ENCODE measurements at regions of chr11 and their contacts with region 1.

Region 1: GRCh38 chr11:26556581-26556980 is 15.5 kb downstream of the MUC15 start:
- DNase-seq: no peak
- ATAC-seq: peak; percentile 85
- H3K4me3 ChIP-seq: no peak overlapping the region
- H3K27ac ChIP-seq: no peak overlapping the region
- H3K4me1 ChIP-seq: no peaks in the 10 kb centered on the region
- H3K27me3 ChIP-seq: no peaks in the 10 kb centered on the region
- CTCF ChIP-seq: no peak
- EP300 ChIP-seq: no peak
- POLR2A ChIP-seq: no peak
- RAD21 ChIP-seq: no peak

Region 2: DNA sequence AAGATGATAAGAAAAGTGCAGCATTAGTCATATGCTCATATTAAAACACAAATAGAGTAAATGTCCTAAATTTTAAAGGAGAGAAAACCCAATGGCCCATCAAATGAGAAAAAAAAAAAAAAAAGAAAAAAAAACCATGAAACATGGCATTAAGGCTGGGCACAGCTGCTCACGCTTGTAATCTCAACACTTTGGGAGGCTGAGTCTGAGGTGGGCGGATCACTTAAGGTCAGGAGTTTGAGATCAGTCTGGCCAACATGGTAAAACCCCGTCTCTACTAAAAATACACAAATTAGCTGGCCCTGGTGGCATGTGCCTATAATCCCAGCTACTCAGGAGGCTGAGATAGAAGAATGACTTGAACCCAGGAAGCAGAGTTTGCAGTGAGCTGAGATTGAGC is 740.2 kb before region 1 on chr11:
- CTCF ChIA-PET with region 1: no interaction called
- POLR2A ChIA-PET with region 1: no interaction called
- RAD21 ChIA-PET with region 1: no interaction called
- SMC1A ChIA-PET with region 1: no interaction called
- in situ Hi-C with region 1: no loop called
- intact Hi-C with region 1: no loop called
- DNase-seq: no peak
- ATAC-seq: no peak
- H3K4me3 ChIP-seq: no peak overlapping the region
- H3K27ac ChIP-seq: no peak overlapping the region
- H3K4me1 ChIP-seq: no peaks in the 10 kb centered on the region
- H3K27me3 ChIP-seq: no peaks in the 10 kb centered on the region
- CTCF ChIP-seq: no peak
- EP300 ChIP-seq: no peak
- POLR2A ChIP-seq: no peak
- RAD21 ChIP-seq: no peak

Region 3: GRCh38 chr11:26522912-26523610 is 33.5 kb before region 1 on chr11:
- CTCF ChIA-PET with region 1: interaction called, 3 read pairs
- POLR2A ChIA-PET with region 1: no interaction called
- RAD21 ChIA-PET with region 1: interaction called, 4 read pairs
- SMC1A ChIA-PET with region 1: interaction called, 13 read pairs
- in situ Hi-C with region 1: no loop called
- intact Hi-C with region 1: no loop called
- DNase-seq: no peak
- ATAC-seq: peak; percentile 64
- H3K4me3 ChIP-seq: no peak overlapping the region
- H3K27ac ChIP-seq: no peak overlapping the region
- H3K4me1 ChIP-seq: no peaks in the 10 kb centered on the region
- H3K27me3 ChIP-seq: no peaks in the 10 kb centered on the region
- CTCF ChIP-seq: peak; percentile 30 to 40 (median 32); a peak in 4 of 6 replicates
- EP300 ChIP-seq: no peak
- POLR2A ChIP-seq: no peak
- RAD21 ChIP-seq: peak; percentile 33

Region 4: DNA sequence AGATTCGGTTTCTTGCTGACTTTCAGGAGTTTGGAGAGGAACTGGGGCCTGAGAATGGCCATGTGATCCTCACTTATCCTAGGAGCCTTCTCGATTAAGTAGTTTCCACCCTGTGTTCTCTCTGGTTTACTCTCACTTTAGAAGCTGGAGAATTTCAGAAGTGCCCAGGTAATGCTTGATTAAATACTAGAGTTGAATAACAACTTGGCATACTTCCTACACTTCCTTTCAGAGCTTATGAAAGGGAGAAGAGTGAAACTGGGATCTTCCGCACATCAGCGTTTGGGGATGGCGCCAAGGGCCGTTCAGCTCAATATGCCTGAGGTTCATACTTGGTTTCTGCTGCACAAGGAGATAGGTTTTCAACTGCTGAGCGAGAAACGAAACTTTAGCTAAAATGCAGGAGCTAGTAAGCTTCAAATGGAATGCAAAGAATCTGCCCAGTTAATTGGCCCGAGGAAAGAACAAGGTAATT is 16.2 kb after region 1 on chr11:
- CTCF ChIA-PET with region 1: interaction called, 15 read pairs
- POLR2A ChIA-PET with region 1: interaction called, 4 read pairs
- RAD21 ChIA-PET with region 1: interaction called, 11 read pairs
- SMC1A ChIA-PET with region 1: interaction called, 15 read pairs
- in situ Hi-C with region 1: no loop called
- intact Hi-C with region 1: no loop called
- DNase-seq: no peak
- ATAC-seq: peak; percentile 17; the same call in 2 of the 3 replicates
- H3K4me3 ChIP-seq: no peak overlapping the region
- H3K27ac ChIP-seq: no peak overlapping the region
- H3K4me1 ChIP-seq: no peaks in the 10 kb centered on the region
- H3K27me3 ChIP-seq: no peaks in the 10 kb centered on the region; a peak in 1 of 4 replicates
- CTCF ChIP-seq: no peak
- EP300 ChIP-seq: no peak
- POLR2A ChIP-seq: no peak
- RAD21 ChIP-seq: no peak

Region 5: GRCh38 chr11:26578998-26579661 is 22.5 kb after region 1 on chr11:
- CTCF ChIA-PET with region 1: interaction called, 15 read pairs
- POLR2A ChIA-PET with region 1: interaction called, 4 read pairs
- RAD21 ChIA-PET with region 1: interaction called, 5 read pairs
- SMC1A ChIA-PET with region 1: interaction called, 15 read pairs
- in situ Hi-C with region 1: no loop called
- intact Hi-C with region 1: no loop called
- DNase-seq: no peak
- ATAC-seq: no peak
- H3K4me3 ChIP-seq: no peak overlapping the region
- H3K27ac ChIP-seq: no peak overlapping the region
- H3K4me1 ChIP-seq: no peaks in the 10 kb centered on the region
- H3K27me3 ChIP-seq: no peaks in the 10 kb centered on the region
- CTCF ChIP-seq: no peak
- EP300 ChIP-seq: no peak
- POLR2A ChIP-seq: no peak
- RAD21 ChIP-seq: no peak

Region 6: DNA sequence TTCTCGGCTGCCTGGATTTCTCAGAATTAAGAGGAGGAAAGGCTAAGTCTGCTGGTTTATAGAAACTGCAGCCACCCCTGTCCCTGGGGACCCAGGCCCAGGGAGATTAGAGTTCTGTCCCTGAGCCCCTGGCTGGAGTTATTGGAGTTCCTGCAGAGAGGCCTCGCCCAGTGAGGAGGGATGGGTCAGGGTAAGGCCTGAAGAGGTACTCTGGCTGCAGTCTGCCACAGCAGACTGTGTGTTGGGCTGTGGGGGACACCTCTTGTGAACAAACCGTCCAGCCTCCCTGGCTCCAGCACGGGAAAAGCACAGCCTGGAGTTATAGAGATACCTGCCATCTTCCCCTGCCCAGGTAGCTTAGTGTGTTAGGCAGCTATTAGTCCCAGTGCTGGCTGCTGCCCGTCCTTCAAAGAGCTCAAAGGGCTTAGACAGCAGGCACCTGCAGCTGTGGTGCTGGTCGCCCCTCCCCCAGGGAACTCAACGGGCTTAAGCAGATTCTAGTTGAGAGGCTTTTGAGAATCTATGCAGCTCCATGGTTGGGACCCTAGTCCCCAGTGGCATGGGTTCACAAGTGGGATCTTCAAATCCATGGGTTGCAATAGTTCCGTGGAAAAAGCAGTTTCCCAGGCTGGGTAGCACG is 52.0 kb after region 1 on chr11:
- CTCF ChIA-PET with region 1: interaction called, 4 read pairs
- POLR2A ChIA-PET with region 1: interaction called, 3 read pairs
- RAD21 ChIA-PET with region 1: interaction called, 7 read pairs
- SMC1A ChIA-PET with region 1: interaction called, 20 read pairs
- in situ Hi-C with region 1: no loop called
- intact Hi-C with region 1: no loop called
- DNase-seq: no peak
- ATAC-seq: peak; percentile 66
- H3K4me3 ChIP-seq: no peak overlapping the region
- H3K27ac ChIP-seq: peak overlapping the region; percentile 58
- H3K4me1 ChIP-seq: peaks cover 4% of the 10 kb centered on the region; the same call in 1 of the 2 replicates
- H3K27me3 ChIP-seq: no peaks in the 10 kb centered on the region
- CTCF ChIP-seq: no peak
- EP300 ChIP-seq: no peak
- POLR2A ChIP-seq: no peak
- RAD21 ChIP-seq: no peak

Region 7: DNA sequence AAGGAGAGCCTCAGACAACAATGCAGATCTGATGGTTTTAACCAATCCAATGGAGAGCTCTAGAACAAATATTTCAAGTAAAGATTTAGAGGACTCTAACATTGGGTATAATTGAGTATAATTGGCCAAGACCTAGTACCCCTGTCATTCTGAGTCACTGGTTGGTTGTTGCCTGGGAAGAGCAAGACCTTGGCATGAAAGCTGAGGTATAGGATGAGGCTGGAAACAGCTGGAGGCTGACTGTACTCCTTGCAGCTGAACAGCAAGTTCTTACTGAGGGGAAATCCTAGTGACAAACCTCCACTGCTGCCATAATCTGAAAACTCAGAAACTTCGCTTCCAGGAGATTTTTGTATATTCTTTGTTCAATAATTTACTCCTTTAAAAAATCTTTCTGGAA is 69.8 kb after region 1 on chr11:
- CTCF ChIA-PET with region 1: interaction called, 6 read pairs
- POLR2A ChIA-PET with region 1: no interaction called
- RAD21 ChIA-PET with region 1: interaction called, 5 read pairs
- SMC1A ChIA-PET with region 1: interaction called, 23 read pairs
- in situ Hi-C with region 1: no loop called
- intact Hi-C with region 1: loop called (anchors 5 kb)
- DNase-seq: no peak
- ATAC-seq: no peak; the same call in 2 of the 3 replicates
- H3K4me3 ChIP-seq: no peak overlapping the region
- H3K27ac ChIP-seq: no peak overlapping the region
- H3K4me1 ChIP-seq: no peaks in the 10 kb centered on the region
- H3K27me3 ChIP-seq: no peaks in the 10 kb centered on the region
- CTCF ChIP-seq: no peak
- EP300 ChIP-seq: no peak
- POLR2A ChIP-seq: no peak
- RAD21 ChIP-seq: no peak